ENCODE measurements at regions of chr9 and their contacts with region 1.

Region 1: DNA sequence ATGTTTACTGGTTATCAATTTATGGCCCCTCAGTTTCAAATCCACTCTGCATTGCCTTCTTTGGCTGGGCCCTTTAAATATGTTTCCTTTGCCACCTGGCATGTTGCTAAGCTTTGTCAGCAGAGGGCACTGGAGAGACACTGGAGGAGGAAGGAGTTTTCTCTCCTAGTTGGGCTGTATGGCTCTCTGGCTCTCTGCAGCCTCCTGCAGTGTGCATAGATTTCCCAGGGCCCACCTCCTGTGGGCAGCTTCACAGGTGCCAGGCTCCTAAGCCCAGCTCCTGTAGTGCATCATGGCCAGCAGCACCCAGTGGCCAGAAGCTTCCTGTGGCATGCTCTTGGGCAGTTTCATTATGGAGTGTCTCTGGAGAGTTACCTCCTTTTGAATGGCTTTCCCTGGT is 23.3 kb downstream of the CAVIN4 start:
- DNase-seq: peak in 1 of 2 experiments; percentile 73
- H3K4me3 ChIP-seq: no peak overlapping the region; a peak in 1 of 8 replicates
- H3K27ac ChIP-seq: no peak overlapping the region
- H3K4me1 ChIP-seq: peaks cover 3 to 14% (median 9%) of the 10 kb centered on the region in 4 experiments; a peak in 5 of 7 replicates
- H3K27me3 ChIP-seq: no peaks in the 10 kb centered on the region
- CTCF ChIP-seq: peak; percentile 56 to 88 (median 86)
- EP300 ChIP-seq: no peak
- POLR2A ChIP-seq: no peak
- RAD21 ChIP-seq: peak; percentile 80 to 88

Region 2: GRCh38 chr9:100619665-100620064 is 18.4 kb after region 1 on chr9:
- CTCF ChIA-PET with region 1: interaction called, 31 read pairs
- POLR2A ChIA-PET with region 1: interaction called, 4 read pairs
- DNase-seq: no peak
- H3K4me3 ChIP-seq: no peak overlapping the region
- H3K27ac ChIP-seq: no peak overlapping the region
- H3K4me1 ChIP-seq: no peaks in the 10 kb centered on the region
- H3K27me3 ChIP-seq: no peaks in the 10 kb centered on the region
- CTCF ChIP-seq: no peak
- EP300 ChIP-seq: no peak
- POLR2A ChIP-seq: no peak
- RAD21 ChIP-seq: no peak

Region 3: GRCh38 chr9:100674419-100675122 is 73.4 kb after region 1 on chr9:
- CTCF ChIA-PET with region 1: interaction called, 18 read pairs
- POLR2A ChIA-PET with region 1: no interaction called
- DNase-seq: no peak
- H3K4me3 ChIP-seq: no peak overlapping the region
- H3K27ac ChIP-seq: no peak overlapping the region
- H3K4me1 ChIP-seq: peaks cover 2 to 18% (median 10%) of the 10 kb centered on the region in 4 experiments; a peak in 5 of 7 replicates
- H3K27me3 ChIP-seq: no peaks in the 10 kb centered on the region
- CTCF ChIP-seq: no peak
- EP300 ChIP-seq: no peak
- POLR2A ChIP-seq: no peak
- RAD21 ChIP-seq: no peak

Region 4: GRCh38 chr9:100700689-100701318 is 99.6 kb after region 1 on chr9:
- CTCF ChIA-PET with region 1: interaction called, 34 read pairs
- POLR2A ChIA-PET with region 1: no interaction called
- DNase-seq: peak in 1 of 2 experiments; percentile 61
- H3K4me3 ChIP-seq: no peak overlapping the region
- H3K27ac ChIP-seq: no peak overlapping the region
- H3K4me1 ChIP-seq: peaks cover 0 to 6% (median 5%) of the 10 kb centered on the region in 4 experiments; a peak in 4 of 7 replicates
- H3K27me3 ChIP-seq: no peaks in the 10 kb centered on the region
- CTCF ChIP-seq: peak; percentile 33 to 71 (median 70)
- EP300 ChIP-seq: no peak
- POLR2A ChIP-seq: no peak
- RAD21 ChIP-seq: peak; percentile 82 to 84

Region 5: DNA sequence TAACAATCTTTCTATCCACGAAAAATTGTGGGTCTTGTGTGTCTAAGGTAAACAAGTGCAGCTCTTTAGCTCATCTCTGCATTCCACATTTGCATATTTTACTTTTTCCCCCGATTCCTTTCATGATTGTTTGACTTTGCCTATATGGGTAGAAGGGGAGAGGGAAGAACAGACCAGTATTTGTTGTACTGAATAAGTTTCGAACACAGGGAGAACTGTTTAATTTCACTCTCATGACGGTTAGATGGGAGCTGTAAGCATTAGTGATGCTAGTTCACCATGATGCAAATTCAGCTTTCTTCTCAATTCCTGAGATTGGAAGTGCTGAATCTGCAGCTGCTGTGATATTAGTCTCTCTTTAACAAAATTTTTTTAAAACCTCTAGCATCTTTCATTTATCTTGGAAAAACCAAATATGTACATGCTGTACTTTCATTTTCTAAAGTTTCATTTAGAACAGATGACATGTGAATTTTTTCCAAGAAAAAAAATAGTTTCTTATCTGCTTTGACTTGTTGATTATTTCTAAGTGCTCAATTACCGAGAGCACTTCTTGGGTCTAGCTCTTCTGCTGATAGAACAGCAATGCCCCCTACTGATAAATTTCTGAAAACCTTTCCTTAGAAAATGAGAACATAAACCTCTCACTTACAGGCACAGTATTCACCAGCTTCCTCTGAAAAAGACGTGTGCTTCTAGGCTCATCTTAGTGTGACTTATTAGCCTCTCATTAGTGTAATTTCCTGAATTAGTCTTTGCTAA is 634.1 kb after region 1 on chr9:
- CTCF ChIA-PET with region 1: interaction called, 13 read pairs
- POLR2A ChIA-PET with region 1: interaction called, 5 read pairs
- DNase-seq: no peak
- H3K4me3 ChIP-seq: no peak overlapping the region
- H3K27ac ChIP-seq: no peak overlapping the region
- H3K4me1 ChIP-seq: peaks cover 0 to 20% (median 2%) of the 10 kb centered on the region in 4 experiments; a peak in 4 of 7 replicates
- H3K27me3 ChIP-seq: no peaks in the 10 kb centered on the region
- CTCF ChIP-seq: peak in 2 of 3 experiments; percentile 55 to 58; a peak in 2 of 4 replicates
- EP300 ChIP-seq: no peak
- POLR2A ChIP-seq: no peak
- RAD21 ChIP-seq: peak; percentile 89 to 92

Measured in H1 (cell line).